ENCODE measurements at regions of chr9 and their contacts with region 1.

Region 1: DNA sequence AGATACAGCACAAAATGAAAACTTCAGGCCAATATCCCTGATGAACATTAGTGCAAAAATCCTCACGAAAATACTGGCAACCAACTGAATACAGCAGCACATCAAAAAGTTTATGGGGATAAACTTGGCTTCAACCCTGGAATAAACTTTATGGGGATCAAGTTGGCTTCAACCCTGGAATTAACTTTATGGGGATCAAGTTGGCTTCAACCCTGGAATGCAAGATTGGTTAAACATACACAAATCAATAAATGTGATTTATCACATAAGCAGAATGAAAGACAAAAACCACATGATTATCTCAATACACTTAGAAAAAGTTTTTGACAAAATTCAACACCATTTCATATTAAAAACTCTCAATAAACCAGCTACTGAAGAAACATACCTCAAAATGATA is 213.7 kb upstream of the DMRTA1 start:
- DNase-seq: no peak
- H3K4me3 ChIP-seq: no peak overlapping the region
- H3K27ac ChIP-seq: no peak overlapping the region
- H3K4me1 ChIP-seq: peaks cover 10% of the 10 kb centered on the region
- H3K27me3 ChIP-seq: no peaks in the 10 kb centered on the region
- CTCF ChIP-seq: no peak

Region 2: DNA sequence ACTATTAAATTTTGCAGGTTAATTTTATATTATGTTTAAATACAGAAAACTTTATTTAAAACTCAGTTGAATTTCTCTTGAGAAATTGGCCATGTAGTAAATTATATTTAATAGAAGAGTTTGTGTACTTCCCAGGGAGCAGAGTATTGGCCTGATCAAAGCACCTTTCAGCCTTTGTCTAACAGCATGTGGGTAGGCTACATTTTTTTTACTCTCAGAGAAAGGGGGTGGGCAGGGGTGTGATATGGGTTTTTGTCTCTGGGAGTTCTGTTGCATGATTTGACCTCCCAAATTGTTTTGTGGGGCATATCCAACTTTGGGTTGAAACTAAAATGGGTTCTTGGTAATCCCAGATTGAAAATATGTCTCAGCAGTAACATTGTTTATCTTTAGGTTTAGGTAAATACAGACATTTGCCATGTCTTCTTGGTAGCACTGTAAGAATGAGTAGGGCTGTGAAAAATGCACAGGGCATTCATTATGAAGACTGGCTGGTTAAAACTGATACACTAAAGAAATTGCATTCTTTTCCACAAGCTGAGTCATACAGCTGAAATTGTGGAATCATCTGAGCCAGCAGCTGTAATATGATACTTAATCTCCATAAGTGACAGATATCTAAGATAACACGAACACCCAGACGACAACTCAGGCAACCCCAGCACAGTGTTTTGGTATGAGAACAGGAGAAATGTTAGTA is 148.5 kb before region 1 on chr9:
- CTCF ChIA-PET with region 1: no interaction called
- dilution Hi-C with region 1: no loop called
- in situ Hi-C with region 1: no loop called
- intact Hi-C with region 1: no loop called
- DNase-seq: peak; percentile 91
- H3K4me3 ChIP-seq: peak overlapping the region in 1 of 3 experiments; percentile 30
- H3K27ac ChIP-seq: peak overlapping the region; percentile 97
- H3K4me1 ChIP-seq: peaks cover 48% of the 10 kb centered on the region
- H3K27me3 ChIP-seq: no peaks in the 10 kb centered on the region
- CTCF ChIP-seq: no peak

Region 3: GRCh38 chr9:22105005-22105722 is 127.8 kb before region 1 on chr9:
- CTCF ChIA-PET with region 1: no interaction called
- dilution Hi-C with region 1: loop called (anchors 5 kb)
- in situ Hi-C with region 1: loop called in 1 of 2 experiments (anchors 10 kb)
- intact Hi-C with region 1: no loop called
- DNase-seq: no peak
- H3K4me3 ChIP-seq: no peak overlapping the region
- H3K27ac ChIP-seq: no peak overlapping the region
- H3K4me1 ChIP-seq: peaks cover 44% of the 10 kb centered on the region
- H3K27me3 ChIP-seq: no peaks in the 10 kb centered on the region
- CTCF ChIP-seq: no peak

Measured in mammary epithelial cell (primary cell).